ENCODE measurements at regions of chr1 and their contacts with region 1.

Region 1: DNA sequence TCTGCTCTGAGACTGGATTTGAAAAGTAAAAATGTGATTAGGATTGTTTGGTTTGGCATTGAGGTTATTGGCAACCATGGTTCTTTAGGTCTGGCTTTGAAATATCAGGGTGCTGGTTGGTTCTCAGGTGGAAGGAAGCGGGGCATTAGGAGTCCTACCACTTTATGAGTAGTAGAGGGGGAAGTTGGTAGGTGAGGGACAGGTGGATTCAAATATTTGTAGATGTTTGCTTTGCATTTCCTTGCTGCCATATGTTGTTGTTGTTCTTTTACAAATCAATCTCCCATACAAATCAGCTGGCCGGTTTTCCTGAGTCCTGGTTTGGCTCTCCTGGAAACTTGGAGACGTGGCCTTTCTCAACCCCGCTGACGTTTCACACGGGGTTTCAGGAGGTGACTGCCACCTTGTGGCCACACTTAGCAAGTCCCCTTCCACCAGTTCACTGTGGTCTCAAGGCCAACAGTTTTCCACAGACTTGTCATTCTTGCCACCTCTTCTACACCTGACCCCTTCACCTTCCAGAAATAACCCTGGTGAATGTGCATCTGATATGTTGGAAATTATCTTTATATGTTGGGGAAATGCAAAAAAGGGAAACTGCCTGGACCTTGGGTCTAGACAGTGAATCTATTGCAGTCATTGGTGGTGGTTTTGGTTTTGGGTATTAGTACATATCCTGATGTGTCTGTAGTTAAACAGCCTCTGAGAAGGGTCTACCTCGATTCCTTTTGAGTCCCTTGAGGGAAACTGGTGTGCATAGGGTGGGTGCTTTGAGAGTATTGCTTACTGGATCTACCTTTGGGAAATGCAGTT is 127.0 kb upstream of the KIAA0040 start:
- DNase-seq: peak; percentile 85

Region 2: DNA sequence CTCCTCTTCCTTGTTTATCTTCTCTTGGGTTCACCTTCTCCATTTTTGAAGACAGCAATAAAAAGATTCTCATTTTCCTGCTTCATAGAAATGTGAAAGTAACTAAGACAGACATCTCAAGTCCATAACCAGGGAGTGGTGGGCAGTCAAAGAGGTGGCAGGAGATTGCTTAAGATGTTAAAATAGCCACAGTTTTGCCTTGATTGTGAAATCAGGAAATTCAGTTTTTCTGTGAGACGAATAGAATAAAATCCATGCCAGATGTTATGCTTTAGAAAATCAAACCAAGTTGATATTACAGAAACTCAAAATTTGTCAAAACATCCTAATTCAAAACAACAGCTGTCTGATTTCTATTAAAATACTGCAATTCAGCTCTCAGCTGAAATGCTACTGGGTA is 194.8 kb before region 1 on chr1:
- CTCF ChIA-PET with region 1: interaction called, 10 read pairs
- POLR2A ChIA-PET with region 1: no interaction called
- DNase-seq: no peak

Region 3: GRCh38 chr1:175154629-175155472 is 164.8 kb before region 1 on chr1:
- CTCF ChIA-PET with region 1: interaction called, 42 read pairs
- POLR2A ChIA-PET with region 1: no interaction called
- DNase-seq: peak; percentile 71

Measured in HEK293T (cell line).